Posterior vena cava (tissue), 2 donors: ENCODE measurements at regions of chr11 and their contacts with region 1.

Region 1: GRCh38 chr11:5631969-5632635 is 7.3 kb downstream of the TRIM34 start:
- DNase-seq: no peak

Region 2: GRCh38 chr11:4809246-4809645 is 822.9 kb before region 1 on chr11:
- intact Hi-C with region 1: loop called in 1 of 2 experiments (anchors 10 kb)
- DNase-seq: no peak